IMR-90 (cell line): ENCODE measurements at regions of chrX and their contacts with region 1.

Region 1: DNA sequence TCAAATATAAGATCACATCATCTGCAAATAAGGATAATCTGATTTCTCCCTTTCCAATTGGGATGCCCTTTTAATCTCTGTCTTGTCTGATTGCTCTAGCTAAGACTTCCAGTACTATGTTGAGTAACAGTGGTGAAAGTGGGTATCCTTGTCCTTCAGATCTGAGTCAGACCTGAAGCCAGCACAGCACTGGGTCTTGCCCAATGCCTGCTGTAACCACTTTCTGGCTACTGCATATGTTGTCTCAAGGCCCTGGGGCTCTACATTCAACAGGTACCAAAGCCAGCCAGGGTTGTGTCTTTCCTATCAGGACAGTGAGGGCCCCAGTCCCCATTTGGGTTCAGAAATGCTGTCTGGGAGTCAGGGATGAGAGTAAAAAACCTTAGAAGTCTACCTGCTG is 90.3 kb downstream of the CYSLTR1 start:
- DNase-seq: no peak
- ATAC-seq: no peak
- H3K4me3 ChIP-seq: no peak overlapping the region
- H3K27ac ChIP-seq: no peak overlapping the region
- H3K4me1 ChIP-seq: no peaks in the 10 kb centered on the region
- H3K27me3 ChIP-seq: no peaks in the 10 kb centered on the region
- CTCF ChIP-seq: no peak
- POLR2A ChIP-seq: no peak
- RAD21 ChIP-seq: no peak

Region 2: GRCh38 chrX:77910108-77910840 is 326.9 kb before region 1 on chrX and contains the start of gene ATP7A:
- CTCF ChIA-PET with region 1: no interaction called
- POLR2A ChIA-PET with region 1: no interaction called
- dilution Hi-C with region 1: no loop called
- in situ Hi-C with region 1: no loop called
- intact Hi-C with region 1: no loop called
- DNase-seq: peak; percentile 88
- ATAC-seq: peak; percentile 87
- H3K4me3 ChIP-seq: peak within 1 kb of the TSS; percentile 99
- H3K27ac ChIP-seq: peak within 1 kb of the TSS; percentile 92
- H3K4me1 ChIP-seq: no peaks in the 10 kb centered on the region
- H3K27me3 ChIP-seq: no peaks in the 10 kb centered on the region
- CTCF ChIP-seq: peak; percentile 62
- POLR2A ChIP-seq: peak; percentile 76; the same call in 1 of the 2 replicates
- RAD21 ChIP-seq: peak; percentile 66
- total RNA-seq, gene ATP7A: 21.1 and 22.4 TPM in 2 replicates

Region 3: DNA sequence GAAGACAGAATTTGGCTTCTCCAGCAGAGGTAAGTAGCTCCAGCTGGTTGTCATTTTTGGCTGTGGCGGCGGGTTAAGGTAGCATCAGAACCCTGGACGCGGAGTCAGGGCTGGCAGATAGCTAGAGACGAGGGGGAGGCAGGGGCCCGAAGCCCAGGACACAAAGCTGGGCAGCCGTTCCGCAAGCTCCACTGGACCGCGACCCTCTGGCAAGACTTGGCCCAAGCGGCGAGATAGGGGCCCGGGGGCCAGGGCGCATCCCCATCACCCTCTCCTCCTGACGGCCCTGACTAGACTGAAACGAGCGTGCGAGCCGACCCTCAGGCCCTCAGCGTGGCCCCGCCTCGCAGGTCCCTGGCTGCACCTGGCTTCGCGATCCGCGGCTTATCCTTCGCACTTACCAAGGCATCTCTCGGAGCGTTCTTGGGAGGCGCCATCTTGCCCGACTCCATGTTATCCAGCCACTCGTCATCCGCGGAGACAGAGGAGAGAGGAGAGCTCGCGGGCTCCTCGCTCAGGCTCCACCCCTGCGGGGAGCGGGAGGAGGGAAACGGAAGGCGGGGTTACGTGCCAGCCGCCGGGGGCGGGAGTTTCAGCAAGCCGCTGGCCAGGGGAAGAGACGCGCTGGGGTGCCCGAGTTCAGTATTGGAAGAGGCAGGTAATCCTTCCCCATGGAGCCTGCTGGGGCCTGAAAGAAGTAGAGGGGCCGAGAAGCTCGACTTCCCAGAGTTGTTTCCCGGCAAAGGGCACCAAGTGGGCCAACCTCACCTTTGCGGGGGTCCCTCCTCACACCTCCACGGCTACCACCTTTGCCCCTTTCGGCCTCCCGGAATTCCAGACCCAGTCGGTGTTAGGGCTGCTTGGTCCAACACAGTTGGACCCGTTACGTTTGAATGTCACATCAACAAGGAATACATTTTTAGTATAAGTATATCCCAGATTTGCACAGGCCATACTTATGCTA is 97.7 kb before region 1 on chrX and contains the start of gene TAF9B:
- CTCF ChIA-PET with region 1: no interaction called
- POLR2A ChIA-PET with region 1: no interaction called
- dilution Hi-C with region 1: no loop called
- in situ Hi-C with region 1: no loop called
- intact Hi-C with region 1: no loop called
- DNase-seq: peak; percentile 71
- ATAC-seq: peak; percentile 100
- H3K4me3 ChIP-seq: peak within 1 kb of the TSS; percentile 69
- H3K27ac ChIP-seq: peak within 1 kb of the TSS; percentile 84
- H3K4me1 ChIP-seq: no peaks in the 10 kb centered on the region
- H3K27me3 ChIP-seq: no peaks in the 10 kb centered on the region
- CTCF ChIP-seq: no peak
- POLR2A ChIP-seq: no peak; the same call in 1 of the 2 replicates
- RAD21 ChIP-seq: no peak
- total RNA-seq, gene TAF9B: 21.5 and 35.3 TPM in 2 replicates

Region 4: GRCh38 chrX:78513971-78514738 is 277.0 kb after region 1 on chrX:
- CTCF ChIA-PET with region 1: no interaction called
- POLR2A ChIA-PET with region 1: interaction called, 17 read pairs
- dilution Hi-C with region 1: no loop called
- in situ Hi-C with region 1: no loop called
- intact Hi-C with region 1: no loop called
- DNase-seq: no peak
- ATAC-seq: no peak
- H3K4me3 ChIP-seq: no peak overlapping the region
- H3K27ac ChIP-seq: no peak overlapping the region
- H3K4me1 ChIP-seq: no peaks in the 10 kb centered on the region
- H3K27me3 ChIP-seq: no peaks in the 10 kb centered on the region
- CTCF ChIP-seq: no peak
- POLR2A ChIP-seq: no peak
- RAD21 ChIP-seq: no peak